HCT116 (cell line): ENCODE measurements at regions of chr1 and their contacts with region 1.

Region 1: GRCh38 chr1:36099681-36100341 is 11.1 kb downstream of the ADPRS start:
- DNase-seq: peak; percentile 48
- ATAC-seq: peak; percentile 90
- H3K4me3 ChIP-seq: peak overlapping the region; percentile 11 to 26
- H3K27ac ChIP-seq: no peak overlapping the region
- H3K4me1 ChIP-seq: peaks cover 0 to 22% of the 10 kb centered on the region in 2 experiments; a peak in 2 of 4 replicates
- H3K27me3 ChIP-seq: no peaks in the 10 kb centered on the region
- CTCF ChIP-seq: peak; percentile 81 to 87 (median 84)
- POLR2A ChIP-seq: no peak
- RAD21 ChIP-seq: peak; percentile 93

Region 2: GRCh38 chr1:36134505-36135329 is 34.9 kb after region 1 on chr1:
- CTCF ChIA-PET with region 1: interaction called, 31 read pairs
- POLR2A ChIA-PET with region 1: no interaction called
- RAD21 ChIA-PET with region 1: interaction called in 1 of 2 experiments, 16 read pairs
- intact Hi-C with region 1: loop called (anchors 1 kb)
- DNase-seq: no peak
- ATAC-seq: peak; percentile 91
- H3K4me3 ChIP-seq: no peak overlapping the region
- H3K27ac ChIP-seq: no peak overlapping the region
- H3K4me1 ChIP-seq: peaks cover 0 to 18% of the 10 kb centered on the region in 2 experiments; a peak in 2 of 4 replicates
- H3K27me3 ChIP-seq: no peaks in the 10 kb centered on the region
- CTCF ChIP-seq: peak; percentile 77 to 81 (median 81); a peak in 5 of 6 replicates
- POLR2A ChIP-seq: no peak
- RAD21 ChIP-seq: peak; percentile 81

Region 3: GRCh38 chr1:36187800-36188593 is 88.2 kb after region 1 on chr1:
- CTCF ChIA-PET with region 1: interaction called, 4 read pairs
- POLR2A ChIA-PET with region 1: no interaction called
- RAD21 ChIA-PET with region 1: no interaction called
- intact Hi-C with region 1: loop called (anchors 1 kb)
- DNase-seq: peak; percentile 79
- ATAC-seq: peak; percentile 96
- H3K4me3 ChIP-seq: no peak overlapping the region
- H3K27ac ChIP-seq: peak overlapping the region; percentile 20; the same call in 1 of the 2 replicates
- H3K4me1 ChIP-seq: peaks cover 4 to 13% of the 10 kb centered on the region in 2 experiments; a peak in 3 of 4 replicates
- H3K27me3 ChIP-seq: no peaks in the 10 kb centered on the region
- CTCF ChIP-seq: peak; percentile 90 to 94 (median 92)
- POLR2A ChIP-seq: no peak
- RAD21 ChIP-seq: peak; percentile 99

Region 4: GRCh38 chr1:36285448-36286101 is 185.8 kb after region 1 on chr1:
- CTCF ChIA-PET with region 1: interaction called, 4 read pairs
- POLR2A ChIA-PET with region 1: no interaction called
- RAD21 ChIA-PET with region 1: no interaction called
- intact Hi-C with region 1: loop called (anchors 1 kb)
- DNase-seq: peak; percentile 78
- ATAC-seq: peak; percentile 98
- H3K4me3 ChIP-seq: no peak overlapping the region
- H3K27ac ChIP-seq: peak overlapping the region; percentile 17; the same call in 1 of the 2 replicates
- H3K4me1 ChIP-seq: no peaks in the 10 kb centered on the region; a peak in 2 of 4 replicates
- H3K27me3 ChIP-seq: no peaks in the 10 kb centered on the region
- CTCF ChIP-seq: peak; percentile 68 to 84 (median 82); a peak in 5 of 6 replicates
- POLR2A ChIP-seq: no peak
- RAD21 ChIP-seq: peak; percentile 85

Region 5: GRCh38 chr1:36369061-36369861 is 269.4 kb after region 1 on chr1:
- CTCF ChIA-PET with region 1: no interaction called
- POLR2A ChIA-PET with region 1: no interaction called
- RAD21 ChIA-PET with region 1: no interaction called
- intact Hi-C with region 1: loop called (anchors 5 kb)
- DNase-seq: peak; percentile 43
- ATAC-seq: peak; percentile 67
- H3K4me3 ChIP-seq: no peak overlapping the region
- H3K27ac ChIP-seq: peak overlapping the region; percentile 16; the same call in 1 of the 2 replicates
- H3K4me1 ChIP-seq: peaks cover 34 to 47% of the 10 kb centered on the region in 2 experiments
- H3K27me3 ChIP-seq: no peaks in the 10 kb centered on the region
- CTCF ChIP-seq: peak; percentile 87 to 89 (median 89)
- POLR2A ChIP-seq: no peak
- RAD21 ChIP-seq: peak; percentile 79

Region 6: DNA sequence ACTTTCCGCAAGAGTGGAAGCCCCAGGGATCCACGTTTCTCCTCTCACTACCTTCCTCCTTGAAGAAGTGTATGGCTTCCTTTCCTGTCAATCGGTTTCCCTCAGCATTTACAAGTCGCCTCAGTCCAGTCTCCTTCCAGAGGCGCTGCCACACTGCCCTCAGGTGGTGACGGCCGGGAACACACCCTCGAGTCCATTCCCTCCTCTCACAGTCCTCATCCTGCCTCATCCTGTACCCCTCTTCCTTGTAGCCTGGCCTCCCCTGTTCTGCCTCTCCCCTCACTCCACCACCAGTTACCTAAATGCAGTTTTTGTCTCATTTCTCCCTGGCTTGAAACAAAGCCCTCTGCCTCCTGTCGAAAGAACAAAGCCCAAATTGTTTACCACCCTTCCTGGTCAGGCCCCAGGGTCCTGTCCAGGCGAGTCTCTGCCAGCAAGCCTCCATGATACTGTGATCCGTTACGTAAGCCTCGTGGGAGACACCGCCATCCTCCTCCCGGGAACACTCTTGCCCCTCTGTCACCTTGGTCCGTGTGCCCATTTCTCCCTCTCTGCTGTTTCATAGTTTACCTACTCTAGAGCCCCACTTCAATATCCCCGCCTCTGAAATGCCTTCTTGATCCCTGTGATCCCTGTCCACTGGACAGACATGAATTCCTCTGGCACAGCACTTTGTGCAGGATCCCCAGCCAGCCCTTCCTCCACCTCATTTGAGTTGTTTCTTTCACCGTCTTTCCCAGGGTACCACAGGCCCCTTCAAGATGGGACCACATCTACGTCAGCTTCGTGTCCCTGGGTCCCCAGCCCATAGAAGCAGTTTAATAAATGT is 321.2 kb after region 1 on chr1:
- CTCF ChIA-PET with region 1: no interaction called
- POLR2A ChIA-PET with region 1: no interaction called
- RAD21 ChIA-PET with region 1: no interaction called
- intact Hi-C with region 1: loop called (anchors 5 kb)
- DNase-seq: peak; percentile 69
- ATAC-seq: peak; percentile 92
- H3K4me3 ChIP-seq: no peak overlapping the region
- H3K27ac ChIP-seq: no peak overlapping the region
- H3K4me1 ChIP-seq: peaks cover 6 to 27% of the 10 kb centered on the region in 2 experiments; a peak in 3 of 4 replicates
- H3K27me3 ChIP-seq: no peaks in the 10 kb centered on the region
- CTCF ChIP-seq: peak; percentile 89 to 94 (median 93)
- POLR2A ChIP-seq: no peak
- RAD21 ChIP-seq: peak; percentile 98

Region 7: DNA sequence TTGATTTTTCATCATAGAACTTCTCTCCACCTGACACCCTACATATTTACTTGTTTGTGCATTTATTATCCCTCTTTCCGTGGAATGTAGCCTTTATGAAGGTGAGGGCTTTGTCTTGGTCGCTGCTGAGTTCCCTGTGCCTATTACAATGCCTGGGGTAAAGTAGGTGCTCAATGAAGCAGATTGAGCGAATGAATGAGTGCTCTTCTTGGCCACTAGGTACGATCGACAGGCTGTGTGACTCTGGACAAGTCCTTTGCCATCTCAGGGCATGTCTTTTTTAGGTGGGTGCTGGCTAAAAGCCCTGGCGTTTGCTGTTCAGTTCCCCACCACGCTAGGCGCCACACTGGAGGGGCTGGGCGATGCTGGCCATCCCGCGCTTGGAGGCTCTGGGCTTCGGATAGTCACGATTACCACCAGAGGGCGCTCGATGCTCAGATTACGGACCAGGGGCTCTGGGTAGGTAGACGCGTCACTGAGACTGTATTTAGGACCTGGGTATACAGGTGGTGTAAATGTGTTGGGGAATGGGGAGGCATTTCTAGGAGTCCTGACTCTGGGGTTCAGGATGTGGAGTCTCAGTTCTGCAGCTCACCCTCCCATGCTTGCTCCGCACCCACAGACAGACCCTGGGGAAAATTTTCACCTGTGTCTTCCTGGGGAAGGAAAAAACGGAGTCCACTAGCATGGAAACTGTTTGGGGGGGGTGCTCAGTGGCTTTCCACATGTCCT is 453.9 kb after region 1 on chr1:
- CTCF ChIA-PET with region 1: no interaction called
- POLR2A ChIA-PET with region 1: no interaction called
- RAD21 ChIA-PET with region 1: no interaction called
- intact Hi-C with region 1: loop called (anchors 10 kb)
- DNase-seq: peak; percentile 60
- ATAC-seq: peak; percentile 100
- H3K4me3 ChIP-seq: no peak overlapping the region
- H3K27ac ChIP-seq: no peak overlapping the region
- H3K4me1 ChIP-seq: 0 out of 4 replicates have a peak, but pooled peaks cover 0 to 3% of the 10 kb centered on the region in 2 experiments
- H3K27me3 ChIP-seq: peaks cover 49% of the 10 kb centered on the region
- CTCF ChIP-seq: peak; percentile 80 to 91 (median 83)
- POLR2A ChIP-seq: no peak
- RAD21 ChIP-seq: peak; percentile 88